ENCODE measurements at regions of chr7 and their contacts with region 1.

Region 1: GRCh38 chr7:116354546-116355408 is 144.4 kb downstream of the TES start:
- DNase-seq: peak in 1 of 2 donors; percentile 10
- ATAC-seq: peak; percentile 29

Region 2: GRCh38 chr7:115731796-115732471 is 622.8 kb before region 1 on chr7:
- intact Hi-C with region 1: no loop called
- DNase-seq: no peak
- ATAC-seq: no peak

Region 3: DNA sequence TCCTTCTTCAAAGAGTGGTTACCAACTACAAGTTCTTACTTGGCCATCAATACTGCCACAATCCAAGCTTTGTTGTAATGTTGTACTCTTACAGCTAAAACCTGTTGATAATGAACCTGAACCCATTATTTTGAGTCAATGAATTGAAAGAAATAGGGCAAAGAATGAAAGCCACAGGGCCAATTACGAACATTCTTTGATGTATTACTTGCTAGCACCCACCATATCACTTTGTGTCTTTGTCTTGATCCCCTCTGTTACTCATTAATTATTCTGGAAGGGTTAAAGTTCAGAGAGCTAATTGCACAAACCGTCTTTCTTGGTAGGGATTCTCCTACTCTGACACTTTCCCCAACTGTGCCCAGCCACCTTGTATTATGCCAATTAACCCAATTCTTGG is 271.0 kb before region 1 on chr7:
- intact Hi-C with region 1: no loop called
- DNase-seq: no peak
- ATAC-seq: no peak

Region 4: GRCh38 chr7:116525913-116526861 is 171.4 kb after region 1 on chr7:
- intact Hi-C with region 1: loop called in 1 of 2 experiments (anchors 10 kb)
- DNase-seq: peak; percentile 72 to 74
- ATAC-seq: peak; percentile 94